ENCODE measurements at regions of chr10 and their contacts with region 1.

Region 1: GRCh38 chr10:47047671-47048525 is 136.7 kb downstream of the PTPN20 start:
- DNase-seq: peak; percentile 84
- H3K4me3 Mint-ChIP-seq: no peak overlapping the region
- H3K27ac Mint-ChIP-seq: no peak overlapping the region
- H3K4me1 Mint-ChIP-seq: peaks cover 14% of the 10 kb centered on the region
- H3K27me3 Mint-ChIP-seq: peaks cover 5% of the 10 kb centered on the region

Region 2: GRCh38 chr10:47034441-47035051 is 13.4 kb before region 1 on chr10:
- CTCF ChIA-PET with region 1: interaction called, 11 read pairs
- DNase-seq: no peak
- H3K4me3 Mint-ChIP-seq: no peak overlapping the region
- H3K27ac Mint-ChIP-seq: no peak overlapping the region
- H3K4me1 Mint-ChIP-seq: no peaks in the 10 kb centered on the region
- H3K27me3 Mint-ChIP-seq: peaks cover 3% of the 10 kb centered on the region

Region 3: DNA sequence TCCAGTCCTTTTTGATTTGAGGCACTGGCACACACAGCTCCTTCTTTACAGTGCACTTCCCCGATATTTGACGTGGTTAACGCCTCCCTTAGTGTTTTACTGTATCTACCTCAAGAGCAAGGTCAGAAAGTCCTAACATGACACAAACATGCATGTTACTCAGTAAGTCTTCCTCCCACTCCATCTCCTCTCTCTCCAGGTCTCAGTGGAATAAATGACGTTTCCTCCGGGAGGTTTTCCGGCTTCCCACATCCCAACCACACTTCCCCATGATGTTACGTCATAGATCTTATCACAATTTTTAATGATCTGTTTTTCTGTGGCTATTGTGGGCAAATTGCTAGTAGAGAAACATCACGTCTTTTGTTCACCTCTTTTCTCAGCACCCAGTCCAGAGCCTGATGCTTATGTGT is 29.1 kb after region 1 on chr10:
- CTCF ChIA-PET with region 1: interaction called, 11 read pairs
- DNase-seq: no peak
- H3K4me3 Mint-ChIP-seq: no peak overlapping the region
- H3K27ac Mint-ChIP-seq: no peak overlapping the region
- H3K4me1 Mint-ChIP-seq: no peaks in the 10 kb centered on the region
- H3K27me3 Mint-ChIP-seq: peaks cover 13% of the 10 kb centered on the region

Region 4: GRCh38 chr10:47323636-47324296 is 275.9 kb after region 1 on chr10:
- CTCF ChIA-PET with region 1: interaction called, 10 read pairs
- DNase-seq: no peak
- H3K4me3 Mint-ChIP-seq: no peak overlapping the region
- H3K27ac Mint-ChIP-seq: no peak overlapping the region
- H3K4me1 Mint-ChIP-seq: no peaks in the 10 kb centered on the region
- H3K27me3 Mint-ChIP-seq: peaks cover 3% of the 10 kb centered on the region